ENCODE measurements at regions of chr14 and their contacts with region 1.

Region 1: DNA sequence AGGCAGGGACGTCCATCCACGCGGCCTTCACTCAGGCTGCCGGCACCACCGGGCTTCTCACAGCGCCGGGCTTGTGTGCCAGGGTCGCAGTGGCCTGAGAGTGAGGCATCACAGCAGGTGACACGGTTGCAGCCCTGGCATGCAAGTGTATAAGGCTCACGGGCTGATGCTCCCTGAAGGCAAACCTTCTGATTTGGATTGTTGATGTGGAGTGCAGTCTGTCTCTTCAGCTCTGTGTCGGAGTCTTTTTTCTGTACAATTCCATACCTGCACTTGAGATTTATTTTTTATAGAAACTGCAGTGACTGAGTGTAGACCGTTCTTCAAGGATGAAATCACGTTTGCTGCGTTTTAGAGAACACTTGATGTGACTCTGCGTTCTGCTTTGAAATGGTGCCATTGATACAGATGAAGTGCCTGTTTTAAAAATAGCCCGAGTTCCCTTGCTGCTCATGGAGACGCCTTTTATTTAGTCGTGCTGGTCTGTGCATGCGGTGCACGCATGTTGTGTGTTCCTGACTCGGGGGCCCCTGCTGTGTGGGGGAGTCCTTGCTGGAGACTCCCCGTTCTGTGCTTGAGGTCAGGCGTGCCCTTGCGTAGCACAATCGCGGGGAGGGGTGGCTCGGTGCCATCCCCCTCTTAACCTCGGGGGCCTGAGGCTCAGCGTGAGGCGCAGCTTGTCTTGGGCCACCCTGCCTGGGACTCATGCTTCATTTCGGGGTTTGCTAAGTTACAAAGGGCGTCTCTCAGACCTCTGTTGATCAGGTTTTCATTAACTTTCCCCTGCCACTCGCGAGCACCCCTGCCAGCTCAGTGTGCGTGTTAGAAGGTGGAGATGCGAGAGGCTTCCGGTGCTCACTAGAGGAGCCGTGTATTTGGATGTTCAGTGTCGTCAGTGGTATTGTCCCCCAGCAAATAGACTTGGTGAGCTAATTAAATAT is 21.6 kb upstream of the AMN start:
- DNase-seq: no peak
- ATAC-seq: peak; percentile 47
- H3K4me3 Mint-ChIP-seq: peak overlapping the region; percentile 75
- H3K27ac Mint-ChIP-seq: peak overlapping the region; percentile 94
- H3K4me1 Mint-ChIP-seq: peaks cover 70% of the 10 kb centered on the region
- H3K27me3 Mint-ChIP-seq: no peaks in the 10 kb centered on the region
- CTCF ChIP-seq: no peak

Region 2: GRCh38 chr14:102768223-102769048 is 132.5 kb before region 1 on chr14:
- CTCF ChIA-PET with region 1: no interaction called
- POLR2A ChIA-PET with region 1: interaction called, 5 read pairs
- intact Hi-C with region 1: loop called (anchors 5 kb)
- DNase-seq: peak; percentile 46
- ATAC-seq: peak; percentile 86
- H3K4me3 Mint-ChIP-seq: peak overlapping the region; percentile 68
- H3K27ac Mint-ChIP-seq: peak overlapping the region; percentile 97
- H3K4me1 Mint-ChIP-seq: peaks cover 85% of the 10 kb centered on the region
- H3K27me3 Mint-ChIP-seq: no peaks in the 10 kb centered on the region
- CTCF ChIP-seq: no peak

Region 3: GRCh38 chr14:102805371-102806246 is 95.3 kb before region 1 on chr14:
- CTCF ChIA-PET with region 1: no interaction called
- POLR2A ChIA-PET with region 1: interaction called, 3 read pairs
- intact Hi-C with region 1: loop called (anchors 5 kb)
- DNase-seq: peak; percentile 30
- ATAC-seq: peak; percentile 51
- H3K4me3 Mint-ChIP-seq: peak overlapping the region; percentile 74
- H3K27ac Mint-ChIP-seq: peak overlapping the region; percentile 83
- H3K4me1 Mint-ChIP-seq: peaks cover 79% of the 10 kb centered on the region
- H3K27me3 Mint-ChIP-seq: no peaks in the 10 kb centered on the region
- CTCF ChIP-seq: no peak

Region 4: DNA sequence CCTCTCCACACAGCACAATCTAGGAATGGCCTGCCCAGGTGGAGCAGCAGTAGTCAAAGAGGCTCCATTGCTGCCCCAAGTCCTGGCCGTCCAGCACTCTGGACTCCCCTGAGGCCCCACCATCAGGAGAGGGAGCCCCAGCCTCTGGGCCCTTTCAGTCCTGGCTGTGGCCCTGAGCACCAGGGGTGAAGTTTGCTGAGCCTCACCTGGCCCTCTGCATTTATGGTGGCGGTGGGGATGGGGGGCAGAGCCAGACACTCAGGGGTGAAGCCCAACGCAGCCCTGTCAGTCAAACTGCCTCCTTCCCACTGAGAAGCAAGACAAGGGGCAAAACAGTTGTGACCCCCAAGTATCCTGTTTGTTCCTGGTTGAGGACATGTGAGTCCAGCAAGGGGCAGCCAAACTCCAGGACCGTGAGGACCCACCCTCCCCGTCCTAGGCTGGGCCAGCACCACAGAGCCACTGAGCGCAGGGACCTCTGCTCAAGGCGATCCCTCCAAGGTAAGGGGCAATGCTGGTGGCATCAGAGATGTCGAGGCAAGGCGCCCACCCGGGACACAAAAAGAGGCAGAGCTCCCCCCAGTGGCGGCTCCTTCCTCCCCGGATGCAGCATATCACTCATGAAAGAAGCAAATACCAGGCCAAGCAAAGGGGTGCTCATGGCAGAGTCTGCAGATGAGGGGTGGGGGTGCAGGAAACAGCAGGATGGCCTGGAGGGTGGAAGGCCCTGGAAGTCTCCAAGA is 16.7 kb after region 1 on chr14:
- CTCF ChIA-PET with region 1: interaction called, 6 read pairs
- POLR2A ChIA-PET with region 1: interaction called, 14 read pairs
- intact Hi-C with region 1: loop called (anchors 1 kb)
- DNase-seq: peak; percentile 64
- ATAC-seq: peak; percentile 23
- H3K4me3 Mint-ChIP-seq: no peak overlapping the region
- H3K27ac Mint-ChIP-seq: peak overlapping the region; percentile 42
- H3K4me1 Mint-ChIP-seq: peaks cover 18% of the 10 kb centered on the region
- H3K27me3 Mint-ChIP-seq: no peaks in the 10 kb centered on the region
- CTCF ChIP-seq: no peak

Region 5: DNA sequence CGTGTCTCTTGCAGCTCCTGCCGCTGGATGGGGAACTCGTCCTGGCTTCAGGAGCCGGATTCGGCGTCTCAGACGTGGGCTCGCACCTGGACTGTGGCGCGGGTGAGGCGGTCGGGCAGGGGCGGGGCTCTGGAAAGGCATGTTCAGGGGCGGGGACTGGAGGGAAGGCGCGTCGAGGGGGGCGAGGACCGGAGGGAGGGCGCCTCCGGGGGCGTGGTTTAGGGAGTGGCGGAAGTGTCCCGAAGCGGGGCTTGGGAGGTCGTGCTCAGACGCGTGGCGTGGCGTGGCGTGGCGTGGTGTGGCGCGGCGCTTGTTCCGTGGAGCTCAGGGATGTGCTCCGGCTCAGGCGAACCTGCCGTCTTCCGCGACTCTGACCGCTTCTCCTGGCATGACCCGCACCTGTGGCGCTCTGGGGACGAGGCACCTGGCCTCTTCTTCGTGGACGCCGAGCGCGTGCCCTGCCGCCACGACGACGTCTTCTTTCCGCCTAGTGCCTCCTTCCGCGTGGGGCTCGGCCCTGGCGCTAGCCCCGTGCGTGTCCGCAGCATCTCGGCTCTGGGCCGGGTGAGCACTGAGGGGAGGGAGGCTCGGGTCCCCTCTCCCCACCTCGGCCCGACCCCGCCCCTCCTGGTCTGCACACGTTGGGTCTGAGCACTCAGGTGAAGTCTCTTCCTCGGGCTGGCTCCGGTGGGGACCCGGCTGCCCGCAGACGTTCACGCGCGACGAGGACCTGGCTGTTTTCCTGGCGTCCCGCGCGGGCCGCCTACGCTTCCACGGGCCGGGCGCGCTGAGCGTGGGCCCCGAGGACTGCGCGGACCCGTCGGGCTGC is 27.7 kb after region 1 on chr14:
- CTCF ChIA-PET with region 1: no interaction called
- POLR2A ChIA-PET with region 1: no interaction called
- intact Hi-C with region 1: loop called (anchors 1 kb)
- DNase-seq: peak; percentile 72
- ATAC-seq: peak; percentile 88
- H3K4me3 Mint-ChIP-seq: peak overlapping the region; percentile 76
- H3K27ac Mint-ChIP-seq: no peak overlapping the region
- H3K4me1 Mint-ChIP-seq: peaks cover 17% of the 10 kb centered on the region
- H3K27me3 Mint-ChIP-seq: peaks cover 6% of the 10 kb centered on the region
- CTCF ChIP-seq: no peak

Region 6: DNA sequence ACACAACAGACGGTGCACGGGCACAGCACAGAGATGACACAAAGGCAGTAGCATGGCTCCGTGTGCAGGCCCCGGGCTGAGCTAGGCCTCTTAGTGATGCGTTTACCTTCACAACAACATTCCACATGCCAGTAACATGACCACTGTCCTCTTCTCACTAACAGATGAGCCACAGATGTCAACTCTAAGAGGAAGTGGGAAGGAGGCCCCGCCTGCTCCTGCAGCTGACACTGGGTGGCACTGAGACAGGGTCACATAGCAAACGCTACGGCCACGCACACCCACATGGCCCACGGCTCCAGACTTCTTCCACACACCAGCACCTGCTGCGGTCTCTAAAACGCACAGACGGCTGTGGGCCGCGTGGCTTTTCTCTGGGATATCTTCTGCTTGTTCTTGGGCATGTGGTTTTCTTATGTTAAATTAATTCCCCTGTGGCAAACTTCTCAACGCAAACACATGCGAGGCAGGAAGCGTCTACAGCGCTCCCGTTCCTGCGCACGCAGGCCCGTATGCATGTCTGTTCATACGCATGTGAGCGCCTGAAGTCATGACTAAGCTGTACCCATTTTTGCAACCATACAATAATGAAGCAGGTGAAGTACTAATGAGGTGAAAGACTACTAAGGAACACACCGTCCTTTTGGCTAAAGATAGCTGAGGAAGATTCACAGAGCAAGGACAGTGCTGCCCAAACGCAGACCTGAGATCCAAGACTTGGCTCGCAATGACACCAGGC is 48.3 kb after region 1 on chr14:
- CTCF ChIA-PET with region 1: no interaction called
- POLR2A ChIA-PET with region 1: interaction called, 3 read pairs
- intact Hi-C with region 1: loop called (anchors 1 kb)
- DNase-seq: peak; percentile 57
- ATAC-seq: peak; percentile 87
- H3K4me3 Mint-ChIP-seq: peak overlapping the region; percentile 36
- H3K27ac Mint-ChIP-seq: peak overlapping the region; percentile 65
- H3K4me1 Mint-ChIP-seq: peaks cover 32% of the 10 kb centered on the region
- H3K27me3 Mint-ChIP-seq: no peaks in the 10 kb centered on the region
- CTCF ChIP-seq: no peak

Region 7: GRCh38 chr14:103198131-103199105 is 297.5 kb after region 1 on chr14:
- CTCF ChIA-PET with region 1: no interaction called
- POLR2A ChIA-PET with region 1: no interaction called
- intact Hi-C with region 1: no loop called
- DNase-seq: no peak
- ATAC-seq: no peak
- H3K4me3 Mint-ChIP-seq: no peak overlapping the region
- H3K27ac Mint-ChIP-seq: no peak overlapping the region
- H3K4me1 Mint-ChIP-seq: no peaks in the 10 kb centered on the region
- H3K27me3 Mint-ChIP-seq: peaks cover 15% of the 10 kb centered on the region
- CTCF ChIP-seq: no peak

Measured in activated B cell treated with CpG ODN at 0.5 μM for 24 hours (primary cell).